Naive thymus-derived CD4-positive, alpha-beta T cell (primary cell): ENCODE measurements at regions of chr2 and their contacts with region 1.

Region 1: GRCh38 chr2:38274286-38275276 is 102.5 kb downstream of the ATL2 start:
- DNase-seq: peak in 7 of 9 donors; percentile 17 to 44 (median 32)
- ATAC-seq: peak; percentile 77
- H3K4me3 ChIP-seq: no peak overlapping the region
- H3K4me3 Mint-ChIP-seq: no peak overlapping the region
- H3K27ac ChIP-seq: no peak overlapping the region
- H3K27ac Mint-ChIP-seq: peak overlapping the region in 1 of 9 donors; percentile 1
- H3K4me1 ChIP-seq: no peaks in the 10 kb centered on the region
- H3K4me1 Mint-ChIP-seq: peaks cover 0 to 7% (median 0%) of the 10 kb centered on the region in 7 donors
- H3K27me3 ChIP-seq: no peaks in the 10 kb centered on the region
- H3K27me3 Mint-ChIP-seq: peaks cover 0 to 5% (median 0%) of the 10 kb centered on the region in 5 donors

Region 2: DNA sequence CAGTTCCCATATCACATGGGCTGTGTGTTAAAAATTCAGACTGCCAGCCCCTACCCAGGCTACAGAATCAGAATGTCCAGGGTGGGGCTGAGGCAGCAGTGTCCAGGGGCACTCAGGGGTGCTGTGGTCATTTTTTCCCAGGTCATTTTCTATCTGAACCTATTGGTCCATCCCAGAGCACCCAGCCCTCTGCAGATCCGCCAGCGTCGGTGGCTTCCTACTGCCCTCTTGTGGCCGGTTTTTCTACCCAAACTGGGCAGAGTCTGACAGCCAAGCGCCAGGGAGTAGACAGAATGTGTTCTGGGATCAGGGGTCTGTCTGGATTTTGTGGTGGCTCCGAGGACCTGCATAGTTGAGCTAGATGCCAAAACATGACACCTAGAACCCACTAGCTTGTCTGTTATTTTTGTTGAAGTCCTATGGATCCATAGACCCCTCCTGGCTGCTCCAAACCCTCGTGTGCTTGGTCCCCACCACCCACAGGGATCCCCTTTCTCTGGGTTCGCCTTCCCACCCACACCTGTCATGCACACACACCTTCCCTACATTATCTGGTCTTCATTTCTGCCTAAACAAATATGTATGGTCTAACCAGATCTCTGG is 383.6 kb before region 1 on chr2:
- CTCF ChIA-PET with region 1: no interaction called
- POLR2A ChIA-PET with region 1: no interaction called
- intact Hi-C with region 1: loop called in 1 of 2 experiments (anchors 2 kb)
- DNase-seq: peak; percentile 17 to 63 (median 44)
- ATAC-seq: peak; percentile 72
- H3K4me3 ChIP-seq: no peak overlapping the region
- H3K4me3 Mint-ChIP-seq: peak overlapping the region in 6 of 10 donors; percentile 12 to 75 (median 55)
- H3K27ac ChIP-seq: no peak overlapping the region
- H3K27ac Mint-ChIP-seq: peak overlapping the region in 2 of 9 donors; percentile 35 to 71
- H3K4me1 ChIP-seq: peaks cover 25 to 33% of the 10 kb centered on the region in 2 donors
- H3K4me1 Mint-ChIP-seq: peaks cover 24 to 58% (median 45%) of the 10 kb centered on the region in 7 donors
- H3K27me3 ChIP-seq: no peaks in the 10 kb centered on the region
- H3K27me3 Mint-ChIP-seq: peaks cover 0 to 29% (median 2%) of the 10 kb centered on the region in 5 donors

Region 3: DNA sequence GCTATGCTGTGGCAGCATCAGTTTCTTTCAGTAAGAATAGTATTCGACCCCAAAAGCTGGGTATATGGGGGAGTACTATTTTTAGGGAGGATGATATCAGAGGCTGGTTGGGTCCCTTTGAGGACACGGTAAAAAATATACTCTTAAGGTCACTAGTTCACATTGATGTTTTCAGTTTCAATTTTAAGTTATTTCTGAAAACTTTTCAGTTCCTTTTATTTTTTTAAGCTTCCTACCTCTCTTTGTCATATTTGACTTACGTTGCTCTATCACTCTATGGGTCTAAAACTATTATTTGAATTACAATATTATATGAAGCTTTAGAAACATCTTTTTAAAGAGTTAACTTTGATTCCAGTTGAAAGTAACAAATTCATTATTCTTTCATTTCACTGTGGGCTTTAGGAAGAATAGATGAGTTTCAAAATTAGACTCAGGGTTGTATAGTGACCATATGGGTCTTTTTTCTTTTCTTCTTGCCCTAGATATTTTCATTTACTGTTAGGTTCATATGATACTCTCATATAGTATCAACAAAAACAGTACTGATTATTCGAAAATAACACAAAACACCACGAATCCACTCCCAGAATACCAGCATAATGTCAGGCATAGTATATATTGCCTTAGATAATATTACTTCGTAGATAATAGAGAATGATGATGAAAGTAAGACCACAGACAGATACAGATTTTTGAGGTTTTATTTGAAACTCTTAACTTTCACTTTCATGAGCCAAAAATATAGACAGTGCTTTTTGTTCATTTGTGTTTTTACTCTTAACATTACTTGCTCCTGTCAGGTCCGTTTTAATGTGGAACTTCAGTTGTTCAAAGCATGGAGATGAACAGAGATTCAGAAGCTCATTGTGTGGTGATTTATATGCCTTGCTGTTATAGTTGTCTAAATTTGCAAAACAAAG is 339.7 kb before region 1 on chr2:
- CTCF ChIA-PET with region 1: no interaction called
- POLR2A ChIA-PET with region 1: no interaction called
- intact Hi-C with region 1: no loop called
- DNase-seq: peak in 6 of 9 donors; percentile 5 to 24 (median 10)
- ATAC-seq: peak; percentile 49
- H3K4me3 ChIP-seq: peak overlapping the region; percentile 34
- H3K4me3 Mint-ChIP-seq: peak overlapping the region in 9 of 10 donors; percentile 52 to 88 (median 81)
- H3K27ac ChIP-seq: no peak overlapping the region
- H3K27ac Mint-ChIP-seq: peak overlapping the region in 8 of 9 donors; percentile 65 to 90 (median 73)
- H3K4me1 ChIP-seq: no peaks in the 10 kb centered on the region
- H3K4me1 Mint-ChIP-seq: peaks cover 13 to 63% (median 40%) of the 10 kb centered on the region in 7 donors
- H3K27me3 ChIP-seq: no peaks in the 10 kb centered on the region
- H3K27me3 Mint-ChIP-seq: peaks cover 0 to 33% (median 0%) of the 10 kb centered on the region in 5 donors

Region 4: DNA sequence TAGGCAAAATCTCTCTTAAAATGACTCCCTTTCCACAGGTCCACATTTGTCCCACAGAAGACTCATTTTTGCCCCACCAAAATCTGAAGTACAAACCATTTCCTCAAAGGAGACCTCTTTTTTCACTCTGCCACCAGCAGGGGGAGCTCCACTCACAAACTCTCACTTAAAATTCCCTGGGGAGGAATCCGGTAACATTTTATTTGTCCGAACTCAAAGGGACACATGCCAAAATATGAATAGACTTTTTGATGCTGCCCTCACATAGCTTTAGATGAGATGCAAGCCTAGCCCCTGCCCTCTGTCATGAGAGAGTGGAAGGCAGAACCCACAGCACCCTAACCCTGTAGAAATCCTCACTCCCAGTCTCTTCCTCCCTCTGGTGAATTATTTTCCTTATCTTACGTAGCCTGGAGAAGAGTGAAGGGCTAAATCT is 292.4 kb before region 1 on chr2:
- CTCF ChIA-PET with region 1: interaction called, 3 read pairs
- POLR2A ChIA-PET with region 1: no interaction called
- intact Hi-C with region 1: loop called (anchors 1 kb)
- DNase-seq: peak in 7 of 9 donors; percentile 33 to 61 (median 39)
- ATAC-seq: peak; percentile 52
- H3K4me3 ChIP-seq: no peak overlapping the region
- H3K4me3 Mint-ChIP-seq: peak overlapping the region in 1 of 10 donors; percentile 14
- H3K27ac ChIP-seq: no peak overlapping the region
- H3K27ac Mint-ChIP-seq: no peak overlapping the region
- H3K4me1 ChIP-seq: no peaks in the 10 kb centered on the region
- H3K4me1 Mint-ChIP-seq: peaks cover 0 to 8% (median 6%) of the 10 kb centered on the region in 7 donors
- H3K27me3 ChIP-seq: no peaks in the 10 kb centered on the region
- H3K27me3 Mint-ChIP-seq: peaks cover 0 to 14% (median 0%) of the 10 kb centered on the region in 5 donors

Region 5: DNA sequence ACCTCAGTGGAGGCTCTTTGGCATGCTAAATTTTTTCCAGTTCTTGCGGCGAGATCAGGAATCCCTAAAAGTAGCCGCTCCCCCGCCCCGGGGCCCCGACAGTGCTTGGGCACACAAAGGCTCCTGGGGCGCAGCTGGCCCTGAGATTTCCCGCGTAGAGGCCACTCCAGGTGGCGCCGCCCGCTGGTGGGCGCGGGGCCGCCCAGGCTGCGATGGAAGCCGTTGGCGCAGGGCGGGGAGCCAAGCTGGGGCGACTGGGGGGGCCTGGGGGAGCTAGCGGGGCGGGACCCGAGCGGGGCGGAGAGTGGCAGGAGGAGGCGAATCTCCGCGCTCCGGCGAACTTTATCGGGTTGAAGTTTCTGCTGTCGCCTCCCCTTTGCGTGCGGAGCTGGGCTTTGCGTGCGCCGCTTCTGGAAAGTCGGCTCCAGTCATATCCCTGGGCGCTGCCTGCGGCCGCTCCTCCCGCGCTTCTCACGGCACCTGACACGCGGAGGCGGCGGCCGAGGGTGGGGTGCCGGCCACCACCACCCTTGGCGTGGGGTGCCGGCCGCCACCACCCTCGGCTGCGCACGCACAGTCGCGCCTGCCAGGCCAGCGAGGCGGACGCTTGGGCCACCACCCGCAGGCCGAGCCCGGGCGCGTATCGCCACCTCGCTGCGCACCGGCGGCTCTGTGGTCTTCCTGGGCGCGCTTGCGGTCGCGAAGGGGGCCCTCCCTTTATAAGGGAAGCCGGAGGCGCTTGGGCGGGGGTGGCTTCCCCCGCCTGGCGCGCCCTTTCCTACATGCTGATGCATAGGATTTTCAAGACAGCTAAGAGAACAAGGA is 197.8 kb before region 1 on chr2:
- CTCF ChIA-PET with region 1: no interaction called
- POLR2A ChIA-PET with region 1: no interaction called
- intact Hi-C with region 1: loop called in 1 of 2 experiments (anchors 1 kb)
- DNase-seq: peak in 2 of 9 donors; percentile 12 to 78
- ATAC-seq: peak; percentile 67
- H3K4me3 ChIP-seq: no peak overlapping the region
- H3K4me3 Mint-ChIP-seq: peak overlapping the region in 9 of 10 donors; percentile 18 to 85 (median 61)
- H3K27ac ChIP-seq: no peak overlapping the region
- H3K27ac Mint-ChIP-seq: peak overlapping the region in 1 of 9 donors; percentile 83
- H3K4me1 ChIP-seq: no peaks in the 10 kb centered on the region
- H3K4me1 Mint-ChIP-seq: peaks cover 7 to 43% (median 19%) of the 10 kb centered on the region in 7 donors
- H3K27me3 ChIP-seq: peaks cover 4 to 5% of the 10 kb centered on the region in 2 donors
- H3K27me3 Mint-ChIP-seq: peaks cover 39 to 73% (median 51%) of the 10 kb centered on the region in 5 donors

Region 6: DNA sequence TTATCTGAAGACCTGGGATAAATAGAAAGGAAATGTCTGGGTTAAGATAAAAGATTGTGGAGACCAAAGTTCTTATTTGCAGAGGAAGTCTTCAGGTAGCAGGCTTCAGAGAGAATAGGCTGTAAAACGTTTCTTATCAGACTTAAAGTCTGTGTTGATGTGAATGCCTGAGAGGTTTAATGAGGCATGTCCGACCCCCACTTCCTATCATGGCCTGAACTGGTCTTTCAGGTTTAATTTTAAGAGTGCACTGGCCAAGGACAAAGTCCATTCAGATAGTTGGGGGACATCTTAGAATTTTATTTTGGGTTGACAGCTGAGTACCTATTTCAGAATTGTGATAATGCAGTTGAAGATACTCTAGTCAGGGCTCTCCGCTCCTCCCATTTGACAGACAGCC is 10.4 kb after region 1 on chr2:
- CTCF ChIA-PET with region 1: no interaction called
- POLR2A ChIA-PET with region 1: no interaction called
- intact Hi-C with region 1: no loop called
- DNase-seq: peak in 1 of 9 donors; percentile 11
- ATAC-seq: no peak
- H3K4me3 ChIP-seq: no peak overlapping the region
- H3K4me3 Mint-ChIP-seq: peak overlapping the region in 4 of 10 donors; percentile 12 to 40 (median 34)
- H3K27ac ChIP-seq: no peak overlapping the region
- H3K27ac Mint-ChIP-seq: peak overlapping the region in 5 of 9 donors; percentile 37 to 68 (median 56)
- H3K4me1 ChIP-seq: peaks cover 0 to 6% of the 10 kb centered on the region in 2 donors
- H3K4me1 Mint-ChIP-seq: peaks cover 0 to 25% (median 19%) of the 10 kb centered on the region in 7 donors
- H3K27me3 ChIP-seq: no peaks in the 10 kb centered on the region
- H3K27me3 Mint-ChIP-seq: peaks cover 11 to 40% (median 27%) of the 10 kb centered on the region in 5 donors

Region 7: DNA sequence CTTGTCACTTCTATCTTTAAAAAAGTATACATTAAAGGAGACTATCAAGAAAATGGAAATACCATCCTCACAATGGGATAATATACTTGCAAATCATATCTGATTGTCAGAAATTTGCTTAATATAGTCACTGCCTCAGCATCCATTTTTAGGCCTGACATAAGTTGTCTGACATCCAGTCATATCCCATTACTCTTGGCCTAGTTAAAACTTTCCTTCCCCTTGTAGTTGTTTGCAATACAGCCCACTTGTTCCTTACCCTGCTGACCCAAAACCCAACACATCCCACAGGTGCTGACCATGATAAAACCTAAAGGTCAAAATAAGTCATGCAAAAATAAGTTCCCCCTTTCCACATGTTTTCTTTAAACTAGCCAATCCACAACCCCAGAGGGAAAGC is 611.5 kb after region 1 on chr2:
- CTCF ChIA-PET with region 1: no interaction called
- POLR2A ChIA-PET with region 1: no interaction called
- intact Hi-C with region 1: no loop called
- DNase-seq: no peak
- ATAC-seq: no peak
- H3K4me3 ChIP-seq: no peak overlapping the region
- H3K4me3 Mint-ChIP-seq: no peak overlapping the region
- H3K27ac ChIP-seq: no peak overlapping the region
- H3K27ac Mint-ChIP-seq: no peak overlapping the region
- H3K4me1 ChIP-seq: no peaks in the 10 kb centered on the region
- H3K4me1 Mint-ChIP-seq: no peaks in the 10 kb centered on the region
- H3K27me3 ChIP-seq: no peaks in the 10 kb centered on the region
- H3K27me3 Mint-ChIP-seq: peaks cover 0 to 7% (median 0%) of the 10 kb centered on the region in 5 donors